Activated CD4-positive, alpha-beta memory T cell treated with anti-CD3 and anti-CD28 coated beads for 36 hours (primary cell): ENCODE measurements at regions of chr11 and their contacts with region 1.

Region 1: GRCh38 chr11:46308631-46309419 is 31.4 kb downstream of the CREB3L1 start:
- DNase-seq: peak; percentile 82
- H3K4me3 Mint-ChIP-seq: no peak overlapping the region
- H3K27ac Mint-ChIP-seq: no peak overlapping the region
- H3K4me1 Mint-ChIP-seq: peaks cover 5% of the 10 kb centered on the region
- H3K27me3 Mint-ChIP-seq: no peaks in the 10 kb centered on the region

Region 2: GRCh38 chr11:46127150-46127638 is 181.6 kb before region 1 on chr11:
- CTCF ChIA-PET with region 1: interaction called, 5 read pairs
- POLR2A ChIA-PET with region 1: no interaction called
- intact Hi-C with region 1: loop called (anchors 5 kb)
- DNase-seq: peak; percentile 74
- H3K4me3 Mint-ChIP-seq: no peak overlapping the region
- H3K27ac Mint-ChIP-seq: peak overlapping the region; percentile 7
- H3K4me1 Mint-ChIP-seq: peaks cover 22% of the 10 kb centered on the region
- H3K27me3 Mint-ChIP-seq: no peaks in the 10 kb centered on the region

Region 3: GRCh38 chr11:46210133-46210636 is 98.6 kb before region 1 on chr11:
- CTCF ChIA-PET with region 1: no interaction called
- POLR2A ChIA-PET with region 1: no interaction called
- intact Hi-C with region 1: no loop called
- DNase-seq: peak; percentile 19
- H3K4me3 Mint-ChIP-seq: no peak overlapping the region
- H3K27ac Mint-ChIP-seq: no peak overlapping the region
- H3K4me1 Mint-ChIP-seq: peaks cover 12% of the 10 kb centered on the region
- H3K27me3 Mint-ChIP-seq: peaks cover 1% of the 10 kb centered on the region

Region 4: DNA sequence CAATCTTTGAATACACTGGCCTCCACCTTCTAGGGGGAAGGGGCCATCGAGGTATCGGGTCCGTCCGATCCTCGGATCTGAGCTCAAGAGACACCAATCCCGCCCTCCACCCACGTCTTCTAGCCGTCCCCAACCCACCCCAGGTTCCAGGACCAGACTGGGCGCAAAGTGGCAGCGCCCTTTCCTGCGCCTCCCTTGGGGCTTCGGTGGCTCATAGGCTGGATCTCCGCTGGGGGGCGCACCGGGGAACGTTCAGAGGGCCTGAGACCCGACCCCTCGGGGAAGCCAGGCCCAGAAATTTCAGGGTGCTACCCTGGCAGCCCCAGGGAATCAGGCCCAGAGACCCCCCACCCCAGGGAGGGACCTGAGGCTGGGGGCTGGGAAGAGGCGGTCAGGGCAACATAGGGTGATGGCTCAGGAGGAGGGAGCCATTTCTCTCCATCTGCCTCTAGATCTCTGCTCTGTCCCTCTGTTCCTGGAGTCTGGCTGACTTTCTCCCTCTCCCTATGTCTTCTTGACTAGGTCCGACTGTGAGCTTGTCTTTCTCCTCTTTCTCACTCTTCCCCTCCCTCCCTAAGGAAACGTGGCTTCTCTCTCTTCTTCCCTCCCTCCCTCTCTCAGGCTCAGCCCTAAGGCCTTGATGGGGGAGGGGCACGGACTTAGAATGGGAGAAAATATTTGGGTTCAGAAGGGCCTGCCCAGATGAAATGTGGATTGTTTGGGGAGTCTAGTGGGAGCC is 30.3 kb before region 1 on chr11:
- CTCF ChIA-PET with region 1: interaction called, 18 read pairs
- POLR2A ChIA-PET with region 1: no interaction called
- intact Hi-C with region 1: no loop called
- DNase-seq: peak; percentile 50
- H3K4me3 Mint-ChIP-seq: no peak overlapping the region
- H3K27ac Mint-ChIP-seq: no peak overlapping the region
- H3K4me1 Mint-ChIP-seq: peaks cover 5% of the 10 kb centered on the region
- H3K27me3 Mint-ChIP-seq: peaks cover 22% of the 10 kb centered on the region

Region 5: DNA sequence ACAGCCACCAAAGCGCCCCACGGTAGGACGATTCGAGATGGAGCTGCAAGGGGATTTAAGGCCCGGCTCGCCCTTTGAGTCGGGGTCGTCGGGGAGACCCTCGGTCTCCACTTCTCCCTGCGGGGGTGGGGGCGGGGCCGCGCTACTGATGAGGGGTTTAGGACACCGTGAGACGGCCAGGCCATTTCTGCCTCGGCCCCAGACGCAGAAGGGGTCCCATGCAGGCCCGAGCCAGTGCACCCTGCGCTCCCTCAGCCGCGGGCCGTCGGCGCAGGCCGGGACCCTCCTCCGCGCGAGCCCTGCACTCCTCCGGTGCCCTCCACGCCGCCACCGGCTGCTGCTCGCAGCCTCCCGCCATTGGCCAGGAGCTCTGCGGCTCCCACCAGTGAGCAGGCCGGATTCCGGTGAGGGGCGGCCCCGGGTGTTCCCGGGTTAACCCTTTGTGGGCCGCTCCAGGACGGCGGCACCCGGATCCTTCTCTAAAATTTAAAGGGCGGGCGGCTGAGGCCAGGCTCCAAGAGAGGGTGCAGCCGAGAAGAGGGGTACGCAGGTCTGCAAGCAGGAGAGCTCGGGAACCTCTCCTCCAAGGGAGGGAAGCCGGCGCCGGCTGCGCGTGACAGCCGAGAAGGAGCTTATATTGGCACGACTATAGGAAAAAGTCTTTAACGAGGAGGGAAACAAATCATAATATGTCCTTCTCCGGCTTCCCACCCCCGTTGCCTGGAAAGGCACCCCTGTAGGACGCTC is 13.3 kb before region 1 on chr11:
- CTCF ChIA-PET with region 1: interaction called, 33 read pairs
- POLR2A ChIA-PET with region 1: no interaction called
- intact Hi-C with region 1: no loop called
- DNase-seq: peak; percentile 77
- H3K4me3 Mint-ChIP-seq: peak overlapping the region; percentile 70
- H3K27ac Mint-ChIP-seq: no peak overlapping the region
- H3K4me1 Mint-ChIP-seq: peaks cover 7% of the 10 kb centered on the region
- H3K27me3 Mint-ChIP-seq: peaks cover 15% of the 10 kb centered on the region

Region 6: DNA sequence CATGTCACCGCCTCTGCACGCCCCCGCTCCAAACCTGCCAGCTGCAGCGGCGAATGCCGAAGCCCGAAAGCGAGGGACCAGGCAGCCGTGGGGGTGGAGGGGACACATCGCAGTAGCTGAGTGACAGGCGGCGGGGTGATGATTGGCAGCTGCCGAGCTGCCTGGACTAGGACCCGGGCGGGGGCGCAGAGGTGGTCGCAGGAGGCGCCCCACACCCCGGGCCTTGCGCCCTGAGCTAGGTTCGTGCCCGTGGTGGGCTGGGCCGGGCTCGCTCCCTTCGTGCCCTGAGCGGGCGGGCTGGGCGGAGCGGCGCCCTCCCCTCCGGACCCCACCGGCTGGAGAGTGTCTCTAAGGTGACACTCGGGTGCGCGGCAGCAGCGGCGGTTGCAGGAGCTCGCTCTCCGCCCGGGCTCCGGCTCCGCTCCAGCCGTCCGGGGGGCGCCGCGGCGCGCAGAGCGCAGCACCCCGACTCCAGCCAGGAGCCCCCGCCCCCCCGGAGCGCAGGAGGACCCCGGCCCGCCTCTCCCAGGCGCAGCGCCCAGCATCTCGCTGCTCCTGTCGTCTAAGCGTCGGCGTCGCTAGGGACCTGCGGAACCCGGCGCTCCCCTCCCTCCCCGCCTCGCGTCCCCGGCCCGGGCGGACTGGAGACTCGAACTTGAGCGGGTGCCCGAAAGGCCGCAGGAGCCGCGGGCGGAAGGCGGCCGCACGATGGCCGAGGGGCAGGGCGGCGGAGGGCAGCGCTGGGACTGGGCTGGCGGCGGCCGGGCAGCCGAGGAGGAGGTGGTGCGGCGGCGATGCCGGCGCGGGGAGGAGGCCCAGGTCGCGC is 24.0 kb after region 1 on chr11:
- CTCF ChIA-PET with region 1: interaction called, 11 read pairs
- POLR2A ChIA-PET with region 1: no interaction called
- intact Hi-C with region 1: no loop called
- DNase-seq: peak; percentile 64
- H3K4me3 Mint-ChIP-seq: peak overlapping the region; percentile 73
- H3K27ac Mint-ChIP-seq: peak overlapping the region; percentile 8
- H3K4me1 Mint-ChIP-seq: peaks cover 67% of the 10 kb centered on the region
- H3K27me3 Mint-ChIP-seq: no peaks in the 10 kb centered on the region

Region 7: GRCh38 chr11:46738887-46739286 is 430.1 kb after region 1 on chr11:
- CTCF ChIA-PET with region 1: no interaction called
- POLR2A ChIA-PET with region 1: no interaction called
- intact Hi-C with region 1: no loop called
- DNase-seq: no peak
- H3K4me3 Mint-ChIP-seq: no peak overlapping the region
- H3K27ac Mint-ChIP-seq: no peak overlapping the region
- H3K4me1 Mint-ChIP-seq: no peaks in the 10 kb centered on the region
- H3K27me3 Mint-ChIP-seq: no peaks in the 10 kb centered on the region